T-cell (primary cell): ENCODE measurements at regions of chr1 and their contacts with region 1.

Region 1: GRCh38 chr1:222073307-222073995 is 331.6 kb upstream of the DUSP10 start:
- DNase-seq: no peak
- ATAC-seq: no peak
- H3K4me3 ChIP-seq: no peak overlapping the region
- H3K4me3 Mint-ChIP-seq: no peak overlapping the region
- H3K27ac ChIP-seq: no peak overlapping the region
- H3K27ac Mint-ChIP-seq: no peak overlapping the region
- H3K4me1 ChIP-seq: no peaks in the 10 kb centered on the region
- H3K4me1 Mint-ChIP-seq: no peaks in the 10 kb centered on the region
- H3K27me3 ChIP-seq: no peaks in the 10 kb centered on the region
- H3K27me3 Mint-ChIP-seq: peaks cover 1 to 4% of the 10 kb centered on the region in 2 donors

Region 2: DNA sequence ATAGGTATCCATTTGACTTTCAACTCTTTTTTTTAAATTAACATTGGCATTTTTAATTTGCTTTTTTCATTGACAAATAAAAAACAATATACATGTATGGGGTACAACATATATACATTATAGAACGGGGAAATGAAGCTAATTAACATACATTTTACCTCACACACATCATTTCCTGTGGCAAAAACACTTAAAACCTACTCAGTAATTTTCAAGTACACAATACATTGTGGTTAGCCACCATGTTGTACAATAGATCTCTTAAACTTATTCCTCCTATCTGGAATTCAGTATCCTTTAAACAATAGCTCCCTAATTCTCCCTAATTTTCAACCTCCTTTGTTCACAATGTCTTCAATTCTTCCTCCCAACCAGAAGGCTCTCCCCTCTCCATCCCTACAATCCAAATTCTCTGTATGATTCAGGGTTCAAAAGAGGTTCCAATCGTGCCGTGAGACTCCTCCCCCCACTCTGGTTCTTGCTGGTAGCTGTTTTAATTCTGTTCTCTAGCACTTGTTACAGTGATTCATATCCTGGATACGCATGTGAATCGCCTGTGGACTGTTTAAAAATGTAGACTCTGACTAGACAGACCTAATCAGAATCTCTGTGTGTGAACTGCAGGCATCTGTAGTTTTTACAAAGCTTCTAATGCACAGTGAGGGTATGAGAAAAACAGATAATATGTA is 244.0 kb before region 1 on chr1:
- CTCF ChIA-PET with region 1: no interaction called
- POLR2A ChIA-PET with region 1: no interaction called
- DNase-seq: peak in 25 of 35 experiments; percentile 5 to 70 (median 27)
- ATAC-seq: peak; percentile 72 to 91 (median 84)
- H3K4me3 ChIP-seq: no peak overlapping the region
- H3K4me3 Mint-ChIP-seq: peak overlapping the region; percentile 41 to 73 (median 56)
- H3K27ac ChIP-seq: peak overlapping the region; percentile 81
- H3K27ac Mint-ChIP-seq: peak overlapping the region; percentile 85 to 95
- H3K4me1 ChIP-seq: peaks cover 9 to 21% of the 10 kb centered on the region in 2 experiments
- H3K4me1 Mint-ChIP-seq: peaks cover 39 to 63% (median 45%) of the 10 kb centered on the region in 3 donors
- H3K27me3 ChIP-seq: no peaks in the 10 kb centered on the region
- H3K27me3 Mint-ChIP-seq: no peaks in the 10 kb centered on the region

Region 3: GRCh38 chr1:222062640-222063039 is 10.8 kb before region 1 on chr1:
- CTCF ChIA-PET with region 1: interaction called in 1 of 2 experiments, 3 read pairs
- POLR2A ChIA-PET with region 1: interaction called in 1 of 2 experiments, 10 read pairs
- DNase-seq: no peak
- ATAC-seq: no peak
- H3K4me3 ChIP-seq: no peak overlapping the region
- H3K4me3 Mint-ChIP-seq: no peak overlapping the region
- H3K27ac ChIP-seq: no peak overlapping the region
- H3K27ac Mint-ChIP-seq: no peak overlapping the region
- H3K4me1 ChIP-seq: no peaks in the 10 kb centered on the region
- H3K4me1 Mint-ChIP-seq: no peaks in the 10 kb centered on the region
- H3K27me3 ChIP-seq: no peaks in the 10 kb centered on the region
- H3K27me3 Mint-ChIP-seq: no peaks in the 10 kb centered on the region